ENCODE measurements at regions of chr17 and their contacts with region 1.

Region 1: GRCh38 chr17:48878918-48879898 is 13.4 kb upstream of the ATP5MC1 start:
- DNase-seq: peak; percentile 66
- H3K4me3 Mint-ChIP-seq: no peak overlapping the region
- H3K27ac Mint-ChIP-seq: no peak overlapping the region
- H3K4me1 Mint-ChIP-seq: peaks cover 17% of the 10 kb centered on the region
- H3K27me3 Mint-ChIP-seq: peaks cover 31% of the 10 kb centered on the region

Region 2: DNA sequence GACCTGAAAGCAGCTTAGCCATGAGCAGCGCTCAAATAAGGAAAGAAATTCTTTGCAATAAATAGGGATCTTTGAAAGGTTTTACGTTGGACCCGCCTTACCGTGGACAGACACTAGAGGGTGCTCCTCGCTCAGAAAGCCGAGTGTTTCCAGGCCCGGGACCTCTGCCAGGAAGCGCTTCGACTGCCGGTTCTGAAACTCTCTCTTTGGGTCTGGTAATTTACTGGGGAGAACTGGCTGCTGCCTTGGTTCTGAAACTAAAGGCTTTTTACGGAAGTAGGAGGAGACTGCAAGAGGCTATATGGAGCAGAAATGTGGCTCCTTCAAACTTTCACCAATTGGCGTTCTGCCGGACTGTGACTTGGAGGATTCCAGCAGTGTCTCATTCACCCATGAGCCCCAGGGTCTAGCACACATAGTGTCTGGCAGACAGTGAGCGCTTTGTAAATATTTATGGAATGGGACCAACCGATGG is 207.5 kb before region 1 on chr17:
- CTCF ChIA-PET with region 1: interaction called, 11 read pairs
- DNase-seq: peak; percentile 80
- H3K4me3 Mint-ChIP-seq: no peak overlapping the region
- H3K27ac Mint-ChIP-seq: no peak overlapping the region
- H3K4me1 Mint-ChIP-seq: peaks cover 5% of the 10 kb centered on the region
- H3K27me3 Mint-ChIP-seq: peaks cover 66% of the 10 kb centered on the region

Region 3: GRCh38 chr17:48724251-48725003 is 154.8 kb before region 1 on chr17:
- CTCF ChIA-PET with region 1: interaction called, 27 read pairs
- DNase-seq: peak; percentile 88
- H3K4me3 Mint-ChIP-seq: peak overlapping the region; percentile 22
- H3K27ac Mint-ChIP-seq: peak overlapping the region; percentile 74
- H3K4me1 Mint-ChIP-seq: peaks cover 42% of the 10 kb centered on the region
- H3K27me3 Mint-ChIP-seq: peaks cover 99% of the 10 kb centered on the region

Region 4: DNA sequence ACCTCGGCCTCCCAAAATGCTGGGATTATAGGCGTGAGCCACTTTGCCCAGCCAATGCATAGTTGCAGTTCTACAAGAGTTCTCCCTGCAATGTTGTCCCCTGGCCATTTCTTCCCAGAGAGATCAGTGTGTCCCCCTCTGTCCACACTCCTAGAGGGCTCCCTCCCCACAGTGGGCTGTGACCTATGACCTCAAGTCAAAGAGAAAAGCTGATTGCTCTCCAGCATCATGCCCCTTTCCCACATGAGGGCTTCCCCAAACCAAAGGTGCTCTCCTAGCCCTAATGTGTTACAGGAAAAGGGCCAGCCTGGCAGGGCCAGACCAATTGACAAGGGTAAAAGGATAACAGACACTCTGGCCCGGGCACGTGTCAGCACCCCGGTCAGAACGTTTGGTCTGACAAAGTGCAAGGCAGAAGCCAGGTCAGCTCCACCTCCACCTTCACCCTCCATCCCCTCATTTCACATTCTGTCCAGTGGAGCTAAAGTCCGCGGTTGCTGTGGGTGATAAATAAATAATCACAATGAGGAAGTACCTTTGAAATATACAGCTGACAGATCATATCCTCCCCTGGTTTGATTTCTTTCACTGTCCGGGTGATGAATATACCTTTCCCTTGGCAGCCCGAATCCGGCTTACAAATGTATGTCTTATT is 80.0 kb before region 1 on chr17:
- CTCF ChIA-PET with region 1: interaction called, 505 read pairs
- DNase-seq: no peak
- H3K4me3 Mint-ChIP-seq: no peak overlapping the region
- H3K27ac Mint-ChIP-seq: no peak overlapping the region
- H3K4me1 Mint-ChIP-seq: no peaks in the 10 kb centered on the region
- H3K27me3 Mint-ChIP-seq: peaks cover 78% of the 10 kb centered on the region

Region 5: GRCh38 chr17:48836004-48836403 is 43.2 kb before region 1 on chr17:
- CTCF ChIA-PET with region 1: interaction called, 12 read pairs
- DNase-seq: peak; percentile 30
- H3K4me3 Mint-ChIP-seq: no peak overlapping the region
- H3K27ac Mint-ChIP-seq: peak overlapping the region; percentile 53
- H3K4me1 Mint-ChIP-seq: peaks cover 94% of the 10 kb centered on the region
- H3K27me3 Mint-ChIP-seq: no peaks in the 10 kb centered on the region

Region 6: DNA sequence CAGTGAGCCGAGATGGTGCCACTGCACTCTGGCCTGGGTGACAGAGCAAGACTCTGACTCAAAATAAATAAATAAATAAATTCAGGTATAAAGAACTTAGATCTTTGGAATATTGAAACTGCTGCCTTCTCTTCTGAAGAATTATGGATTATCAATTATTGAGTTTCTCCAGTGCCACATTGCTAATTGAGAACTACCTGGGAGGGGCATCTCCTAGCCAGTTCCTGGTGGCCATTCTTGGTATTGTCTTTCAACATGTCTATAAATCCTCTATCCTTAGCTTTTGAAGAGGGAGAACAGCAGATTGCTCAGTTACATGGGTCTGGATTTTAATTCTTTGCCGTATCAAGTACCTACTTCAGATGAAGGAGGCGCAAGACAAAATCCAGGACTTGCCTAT is 19.2 kb before region 1 on chr17:
- CTCF ChIA-PET with region 1: interaction called, 37 read pairs
- DNase-seq: no peak
- H3K4me3 Mint-ChIP-seq: no peak overlapping the region
- H3K27ac Mint-ChIP-seq: no peak overlapping the region
- H3K4me1 Mint-ChIP-seq: peaks cover 9% of the 10 kb centered on the region
- H3K27me3 Mint-ChIP-seq: no peaks in the 10 kb centered on the region

Region 7: DNA sequence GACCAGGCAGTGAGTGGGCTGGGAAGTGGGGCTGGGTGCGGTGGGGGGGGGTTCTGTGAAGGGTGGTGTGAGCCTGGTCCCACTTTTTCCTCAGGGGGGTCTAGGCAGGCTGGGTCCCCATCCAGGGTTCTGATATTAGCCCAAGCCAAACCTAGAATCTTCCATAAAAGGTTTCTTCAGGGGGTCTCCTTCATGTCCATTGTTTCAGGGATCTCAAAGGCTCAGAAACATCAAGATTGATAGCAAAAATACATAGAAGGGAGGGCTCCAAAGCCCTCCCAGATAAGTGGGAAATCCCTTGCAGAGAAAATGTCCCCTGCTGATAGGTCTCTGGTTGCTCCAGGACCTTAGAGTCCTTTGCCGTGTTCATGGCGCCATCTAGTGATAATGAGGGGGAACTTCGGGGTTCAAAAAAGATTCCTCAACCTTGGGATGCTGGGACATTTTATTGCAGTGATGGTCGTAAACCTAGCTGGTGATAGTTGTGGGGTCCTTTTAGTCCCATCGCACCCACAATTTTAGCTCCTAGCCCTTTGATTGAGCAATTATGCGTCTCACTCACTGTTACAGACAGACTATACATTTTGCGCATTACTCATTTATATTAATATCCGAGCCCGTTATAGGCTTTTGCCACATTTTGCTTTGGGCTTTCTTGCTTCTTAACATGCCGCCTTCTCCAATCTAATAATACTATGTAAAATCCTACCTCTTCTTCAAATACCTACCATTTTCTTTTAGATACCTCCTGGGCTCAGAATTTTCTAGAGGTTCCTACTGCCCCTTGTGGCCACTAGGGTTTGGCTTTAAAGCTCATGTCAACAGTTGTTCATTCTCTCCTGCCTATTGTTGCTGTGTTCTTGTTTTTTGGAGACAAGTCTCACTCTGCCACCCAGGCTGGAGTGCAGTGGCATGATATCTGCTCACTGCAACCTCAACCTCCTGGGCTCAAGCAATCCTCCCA is 153.0 kb after region 1 on chr17:
- CTCF ChIA-PET with region 1: interaction called, 19 read pairs
- DNase-seq: peak; percentile 58
- H3K4me3 Mint-ChIP-seq: no peak overlapping the region
- H3K27ac Mint-ChIP-seq: no peak overlapping the region
- H3K4me1 Mint-ChIP-seq: no peaks in the 10 kb centered on the region
- H3K27me3 Mint-ChIP-seq: peaks cover 36% of the 10 kb centered on the region

Measured in activated naive CD4-positive, alpha-beta T cell treated with anti-CD3 and anti-CD28 coated beads, Interleukin-2, amount 10 ng/mL, durations not matched to agents 7 days and 5 days (primary cell).